GM12878 (cell line): ENCODE measurements at regions of chr12 and their contacts with region 1.

Region 1: GRCh38 chr12:46124848-46125619 is 134.7 kb upstream of the SCAF11 start:
- DNase-seq: no peak
- ATAC-seq: peak; percentile 96
- H3K4me3 ChIP-seq: no peak overlapping the region
- H3K27ac ChIP-seq: no peak overlapping the region
- H3K4me1 ChIP-seq: no peaks in the 10 kb centered on the region
- H3K27me3 ChIP-seq: no peaks in the 10 kb centered on the region; a peak in 1 of 4 replicates
- CTCF ChIP-seq: peak; percentile 58 to 74 (median 61); a peak in 5 of 6 replicates
- EP300 ChIP-seq: no peak
- POLR2A ChIP-seq: no peak
- RAD21 ChIP-seq: peak; percentile 84

Region 2: GRCh38 chr12:45688183-45688582 is 436.9 kb before region 1 on chr12:
- CTCF ChIA-PET with region 1: no interaction called
- POLR2A ChIA-PET with region 1: no interaction called
- RAD21 ChIA-PET with region 1: no interaction called
- SMC1A ChIA-PET with region 1: no interaction called
- in situ Hi-C with region 1: no loop called
- intact Hi-C with region 1: no loop called
- DNase-seq: no peak
- ATAC-seq: no peak
- H3K4me3 ChIP-seq: no peak overlapping the region
- H3K27ac ChIP-seq: no peak overlapping the region
- H3K4me1 ChIP-seq: no peaks in the 10 kb centered on the region; the same call in 1 of the 2 replicates
- H3K27me3 ChIP-seq: no peaks in the 10 kb centered on the region
- CTCF ChIP-seq: no peak
- EP300 ChIP-seq: no peak
- POLR2A ChIP-seq: no peak
- RAD21 ChIP-seq: no peak

Region 3: DNA sequence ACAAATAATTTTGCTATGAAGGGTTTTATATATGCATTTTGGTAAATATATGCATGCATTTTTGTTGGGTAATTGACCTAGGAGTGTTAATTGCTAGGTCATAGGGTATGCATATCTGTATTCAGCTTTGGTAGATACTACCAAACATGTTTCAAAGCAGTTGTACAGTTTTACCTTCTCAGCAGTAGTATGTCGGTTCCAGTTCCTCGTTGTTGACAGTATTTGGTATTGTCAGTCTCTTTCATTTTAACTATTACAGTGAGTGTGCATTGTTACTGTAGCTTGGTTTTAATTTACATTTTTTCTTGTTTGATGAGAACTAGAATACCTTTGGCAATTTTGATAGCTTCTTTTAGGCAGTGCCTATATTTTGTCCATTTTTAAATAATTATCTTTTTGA is 296.6 kb before region 1 on chr12:
- CTCF ChIA-PET with region 1: no interaction called
- POLR2A ChIA-PET with region 1: no interaction called
- RAD21 ChIA-PET with region 1: no interaction called
- SMC1A ChIA-PET with region 1: no interaction called
- in situ Hi-C with region 1: no loop called
- intact Hi-C with region 1: no loop called
- DNase-seq: peak; percentile 12
- ATAC-seq: peak; percentile 92
- H3K4me3 ChIP-seq: no peak overlapping the region
- H3K27ac ChIP-seq: no peak overlapping the region
- H3K4me1 ChIP-seq: peaks cover 9% of the 10 kb centered on the region
- H3K27me3 ChIP-seq: no peaks in the 10 kb centered on the region
- CTCF ChIP-seq: no peak
- EP300 ChIP-seq: no peak
- POLR2A ChIP-seq: no peak
- RAD21 ChIP-seq: no peak

Region 4: GRCh38 chr12:45898094-45898493 is 226.9 kb before region 1 on chr12:
- CTCF ChIA-PET with region 1: no interaction called
- POLR2A ChIA-PET with region 1: no interaction called
- RAD21 ChIA-PET with region 1: no interaction called
- SMC1A ChIA-PET with region 1: no interaction called
- in situ Hi-C with region 1: no loop called
- intact Hi-C with region 1: no loop called
- DNase-seq: no peak
- ATAC-seq: no peak
- H3K4me3 ChIP-seq: no peak overlapping the region
- H3K27ac ChIP-seq: no peak overlapping the region
- H3K4me1 ChIP-seq: no peaks in the 10 kb centered on the region
- H3K27me3 ChIP-seq: no peaks in the 10 kb centered on the region
- CTCF ChIP-seq: no peak
- EP300 ChIP-seq: no peak
- POLR2A ChIP-seq: no peak
- RAD21 ChIP-seq: no peak

Region 5: DNA sequence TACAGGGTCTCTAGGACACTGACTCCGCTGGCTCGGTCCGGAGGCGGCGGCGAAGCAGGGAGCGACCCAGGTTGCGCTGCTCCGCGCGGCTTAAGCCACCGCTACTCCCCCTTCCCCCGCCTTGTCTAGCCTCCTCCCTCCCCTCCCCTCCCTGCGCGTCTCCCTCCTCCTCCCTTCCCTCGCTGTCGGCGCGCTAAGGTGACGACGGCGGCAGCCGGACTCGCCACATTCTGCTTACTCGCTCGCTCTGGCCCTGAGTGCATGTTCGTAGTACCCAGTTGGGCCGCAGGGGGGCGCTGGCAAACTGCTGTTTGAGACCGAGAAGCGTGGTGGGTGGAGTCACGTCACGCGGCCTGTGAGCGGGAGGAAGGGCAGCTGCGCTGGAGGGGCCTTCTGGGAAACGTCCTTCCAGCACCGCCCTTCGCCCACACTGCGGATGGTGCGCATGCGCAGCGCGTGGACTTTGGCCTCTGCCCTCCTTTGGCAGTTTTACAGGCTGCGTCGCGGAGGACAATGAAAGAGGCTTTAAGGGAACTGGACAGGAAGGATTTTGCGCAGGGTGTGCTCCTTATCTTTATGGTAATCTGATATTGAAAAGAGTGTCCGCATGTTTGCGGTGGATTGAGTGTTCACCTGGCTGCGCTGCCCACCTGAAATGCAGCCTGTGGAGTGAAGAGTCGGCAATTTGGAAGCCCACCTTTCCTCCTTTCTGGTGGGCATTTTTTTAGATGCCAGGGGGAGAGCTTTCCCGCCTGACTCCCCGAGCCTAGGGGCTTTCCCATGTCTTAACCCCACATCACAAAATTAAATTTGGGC is 134.4 kb before region 1 on chr12 and contains the start of gene SCAF11:
- CTCF ChIA-PET with region 1: interaction called, 22 read pairs
- POLR2A ChIA-PET with region 1: interaction called, 5 read pairs
- RAD21 ChIA-PET with region 1: interaction called, 21 read pairs
- SMC1A ChIA-PET with region 1: interaction called, 18 read pairs
- in situ Hi-C with region 1: no loop called
- intact Hi-C with region 1: loop called (anchors 5 kb)
- DNase-seq: peak; percentile 99
- ATAC-seq: peak; percentile 85
- H3K4me3 ChIP-seq: peak within 1 kb of the TSS; percentile 92
- H3K27ac ChIP-seq: peak within 1 kb of the TSS; percentile 99
- H3K4me1 ChIP-seq: peaks cover 8% of the 10 kb centered on the region
- H3K27me3 ChIP-seq: no peaks in the 10 kb centered on the region
- CTCF ChIP-seq: peak; percentile 93 to 99 (median 98); a peak in 5 of 6 replicates
- EP300 ChIP-seq: peak; percentile 37 to 53; a peak in 2 of 4 replicates
- POLR2A ChIP-seq: peak; percentile 88
- RAD21 ChIP-seq: peak; percentile 88
- polyA plus RNA-seq, gene SCAF11: 42.0 to 44.9 TPM

Region 6: GRCh38 chr12:46153268-46153872 is 28.3 kb after region 1 on chr12:
- CTCF ChIA-PET with region 1: interaction called, 24 read pairs
- POLR2A ChIA-PET with region 1: no interaction called
- RAD21 ChIA-PET with region 1: interaction called, 19 read pairs
- SMC1A ChIA-PET with region 1: interaction called, 22 read pairs
- in situ Hi-C with region 1: no loop called
- intact Hi-C with region 1: no loop called
- DNase-seq: no peak
- ATAC-seq: peak; percentile 56
- H3K4me3 ChIP-seq: no peak overlapping the region
- H3K27ac ChIP-seq: no peak overlapping the region
- H3K4me1 ChIP-seq: no peaks in the 10 kb centered on the region
- H3K27me3 ChIP-seq: no peaks in the 10 kb centered on the region
- CTCF ChIP-seq: peak; percentile 59 to 76 (median 64); a peak in 5 of 6 replicates
- EP300 ChIP-seq: no peak
- POLR2A ChIP-seq: no peak
- RAD21 ChIP-seq: peak; percentile 93

Region 7: DNA sequence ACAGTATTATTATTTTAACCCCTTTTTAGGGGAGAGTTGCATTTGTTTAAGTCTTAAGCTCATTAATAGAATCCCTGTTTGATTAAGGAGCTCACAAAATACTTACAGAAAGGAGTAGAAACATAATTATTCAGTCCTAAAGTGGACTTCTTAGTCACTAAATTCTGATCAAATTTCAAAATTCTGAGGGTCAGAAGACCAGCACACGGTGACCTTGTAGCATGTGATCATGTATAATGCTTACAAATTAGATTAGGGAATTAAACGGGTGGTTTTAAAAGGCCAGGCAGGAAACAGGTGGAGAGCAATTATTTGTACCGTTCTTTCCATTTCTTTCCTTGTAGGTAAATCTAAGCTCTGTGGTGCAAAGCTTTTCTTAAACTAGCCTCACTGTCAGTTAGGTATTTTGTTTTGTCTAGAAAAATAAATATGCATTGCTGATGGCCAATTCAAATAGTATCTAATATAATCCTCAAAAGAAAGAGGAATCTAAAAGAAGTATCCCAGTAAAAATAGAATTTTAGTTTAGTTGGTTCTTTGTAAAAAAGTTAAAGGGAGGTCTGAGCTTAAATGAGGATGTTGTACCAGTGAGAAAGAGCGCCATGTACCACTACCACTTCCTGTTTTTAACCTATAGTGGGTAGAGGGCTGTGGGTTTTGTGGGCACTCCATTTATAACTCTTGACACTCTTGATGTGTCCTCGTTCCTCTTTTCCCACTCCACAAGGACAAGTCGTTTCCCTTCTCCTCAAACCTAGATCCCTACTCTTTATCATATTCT is 92.7 kb after region 1 on chr12:
- CTCF ChIA-PET with region 1: interaction called, 16 read pairs
- POLR2A ChIA-PET with region 1: no interaction called
- RAD21 ChIA-PET with region 1: interaction called, 8 read pairs
- SMC1A ChIA-PET with region 1: interaction called, 5 read pairs
- in situ Hi-C with region 1: no loop called
- intact Hi-C with region 1: no loop called
- DNase-seq: peak; percentile 90
- ATAC-seq: peak; percentile 71
- H3K4me3 ChIP-seq: peak overlapping the region; percentile 44; the same call in 1 of the 2 replicates
- H3K27ac ChIP-seq: peak overlapping the region; percentile 87
- H3K4me1 ChIP-seq: peaks cover 62% of the 10 kb centered on the region
- H3K27me3 ChIP-seq: no peaks in the 10 kb centered on the region
- CTCF ChIP-seq: no peak
- EP300 ChIP-seq: peak; percentile 95 to 97
- POLR2A ChIP-seq: no peak
- RAD21 ChIP-seq: no peak

Region 8: GRCh38 chr12:46342562-46343033 is 217.6 kb after region 1 on chr12:
- CTCF ChIA-PET with region 1: interaction called, 20 read pairs
- POLR2A ChIA-PET with region 1: no interaction called
- RAD21 ChIA-PET with region 1: interaction called, 4 read pairs
- SMC1A ChIA-PET with region 1: interaction called, 9 read pairs
- in situ Hi-C with region 1: no loop called
- intact Hi-C with region 1: no loop called
- DNase-seq: no peak
- ATAC-seq: peak; percentile 98
- H3K4me3 ChIP-seq: no peak overlapping the region
- H3K27ac ChIP-seq: no peak overlapping the region
- H3K4me1 ChIP-seq: no peaks in the 10 kb centered on the region
- H3K27me3 ChIP-seq: no peaks in the 10 kb centered on the region
- CTCF ChIP-seq: peak; percentile 43 to 59 (median 45); a peak in 5 of 6 replicates
- EP300 ChIP-seq: no peak
- POLR2A ChIP-seq: no peak
- RAD21 ChIP-seq: peak; percentile 68

Region 9: DNA sequence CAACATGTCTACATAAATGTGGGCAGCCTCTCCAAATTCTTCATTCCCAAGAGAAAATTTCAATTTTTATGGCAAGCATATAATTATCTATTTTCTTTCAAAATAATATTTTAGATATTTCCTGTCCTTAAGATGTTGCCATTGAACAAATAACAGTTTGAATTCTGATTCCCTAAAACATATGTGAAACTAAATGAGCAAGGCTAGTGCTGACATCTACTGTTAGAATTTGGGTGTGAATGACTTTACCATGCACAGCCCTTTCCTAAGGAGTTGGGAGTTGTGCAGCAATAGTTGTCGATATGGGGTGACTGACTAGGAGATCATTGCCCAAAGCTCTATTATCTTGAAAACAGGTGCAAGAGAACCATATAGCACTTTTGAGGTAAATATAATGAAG is 808.9 kb after region 1 on chr12:
- CTCF ChIA-PET with region 1: interaction called, 25 read pairs
- POLR2A ChIA-PET with region 1: no interaction called
- RAD21 ChIA-PET with region 1: interaction called, 15 read pairs
- SMC1A ChIA-PET with region 1: interaction called, 16 read pairs
- in situ Hi-C with region 1: no loop called
- intact Hi-C with region 1: loop called (anchors 5 kb)
- DNase-seq: no peak
- ATAC-seq: peak; percentile 70
- H3K4me3 ChIP-seq: no peak overlapping the region
- H3K27ac ChIP-seq: no peak overlapping the region
- H3K4me1 ChIP-seq: no peaks in the 10 kb centered on the region
- H3K27me3 ChIP-seq: no peaks in the 10 kb centered on the region
- CTCF ChIP-seq: peak; percentile 23 to 56 (median 51); a peak in 5 of 6 replicates
- EP300 ChIP-seq: no peak
- POLR2A ChIP-seq: no peak
- RAD21 ChIP-seq: peak; percentile 84